ENCODE measurements at regions of chr10 and their contacts with region 1.

Region 1: DNA sequence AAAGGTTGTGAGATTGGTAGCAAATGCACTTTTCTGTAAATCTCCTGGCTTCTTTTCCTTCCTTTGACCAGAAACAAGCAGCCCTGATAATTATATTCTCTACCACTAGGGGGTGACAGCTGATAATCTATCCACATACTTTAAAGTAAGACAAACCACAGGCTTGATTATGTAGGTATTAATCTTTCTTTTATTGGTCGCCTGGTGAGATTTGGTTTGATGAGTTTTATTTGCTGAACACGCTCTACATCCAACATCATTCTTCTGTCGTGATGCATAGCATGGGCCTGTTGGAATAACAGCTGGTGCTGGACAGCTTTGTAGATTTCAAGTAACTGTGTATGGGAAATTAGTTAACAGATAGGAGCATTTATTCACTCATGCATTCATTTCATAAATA is 63.5 kb downstream of the ZNF365 start:
- DNase-seq: peak in 1 of 2 experiments; percentile 67
- H3K4me3 ChIP-seq: no peak overlapping the region
- H3K27ac ChIP-seq: no peak overlapping the region
- H3K4me1 ChIP-seq: peaks cover 17% of the 10 kb centered on the region
- H3K27me3 ChIP-seq: no peaks in the 10 kb centered on the region
- CTCF ChIP-seq: peak; percentile 95

Region 2: GRCh38 chr10:62268399-62269114 is 169.1 kb before region 1 on chr10 and contains the start of gene RTKN2:
- CTCF ChIA-PET with region 1: no interaction called
- POLR2A ChIA-PET with region 1: interaction called, 9 read pairs
- intact Hi-C with region 1: loop called (anchors 1 kb)
- DNase-seq: peak; percentile 90 to 96
- H3K4me3 ChIP-seq: peak within 1 kb of the TSS; percentile 95
- H3K27ac ChIP-seq: peak within 1 kb of the TSS; percentile 54
- H3K4me1 ChIP-seq: peaks cover 33% of the 10 kb centered on the region
- H3K27me3 ChIP-seq: no peaks in the 10 kb centered on the region
- CTCF ChIP-seq: no peak
- total RNA-seq, gene RTKN2: 16.1 and 18.5 TPM in 2 replicates

Region 3: DNA sequence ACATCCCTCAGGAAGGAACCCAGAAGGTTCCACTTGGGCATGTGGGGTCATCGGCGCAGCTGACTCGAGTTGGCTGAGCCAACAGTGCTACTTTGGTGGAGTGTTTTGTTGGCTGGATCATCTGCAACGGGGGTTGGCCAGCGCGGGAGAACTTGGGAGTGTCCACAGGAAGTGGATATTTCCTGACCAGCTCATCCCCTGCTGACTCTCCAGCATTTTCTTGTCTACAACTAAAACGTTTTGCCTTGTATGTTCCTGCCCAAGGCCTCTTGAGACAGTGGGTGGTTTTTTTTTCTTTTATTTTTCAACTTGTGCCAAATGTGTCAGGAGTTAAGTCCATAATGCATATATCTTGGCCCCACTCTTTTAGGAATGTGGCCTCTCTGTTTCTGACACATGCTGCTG is 145.1 kb after region 1 on chr10:
- CTCF ChIA-PET with region 1: no interaction called
- POLR2A ChIA-PET with region 1: no interaction called
- intact Hi-C with region 1: loop called (anchors 10 kb)
- DNase-seq: no peak
- H3K4me3 ChIP-seq: no peak overlapping the region
- H3K27ac ChIP-seq: no peak overlapping the region
- H3K4me1 ChIP-seq: no peaks in the 10 kb centered on the region
- H3K27me3 ChIP-seq: no peaks in the 10 kb centered on the region
- CTCF ChIP-seq: no peak

Region 4: GRCh38 chr10:63083904-63084689 is 646.4 kb after region 1 on chr10:
- CTCF ChIA-PET with region 1: no interaction called
- POLR2A ChIA-PET with region 1: no interaction called
- intact Hi-C with region 1: loop called (anchors 5 kb)
- DNase-seq: peak; percentile 24 to 53
- H3K4me3 ChIP-seq: no peak overlapping the region
- H3K27ac ChIP-seq: no peak overlapping the region
- H3K4me1 ChIP-seq: no peaks in the 10 kb centered on the region
- H3K27me3 ChIP-seq: no peaks in the 10 kb centered on the region
- CTCF ChIP-seq: peak; percentile 84

Region 5: DNA sequence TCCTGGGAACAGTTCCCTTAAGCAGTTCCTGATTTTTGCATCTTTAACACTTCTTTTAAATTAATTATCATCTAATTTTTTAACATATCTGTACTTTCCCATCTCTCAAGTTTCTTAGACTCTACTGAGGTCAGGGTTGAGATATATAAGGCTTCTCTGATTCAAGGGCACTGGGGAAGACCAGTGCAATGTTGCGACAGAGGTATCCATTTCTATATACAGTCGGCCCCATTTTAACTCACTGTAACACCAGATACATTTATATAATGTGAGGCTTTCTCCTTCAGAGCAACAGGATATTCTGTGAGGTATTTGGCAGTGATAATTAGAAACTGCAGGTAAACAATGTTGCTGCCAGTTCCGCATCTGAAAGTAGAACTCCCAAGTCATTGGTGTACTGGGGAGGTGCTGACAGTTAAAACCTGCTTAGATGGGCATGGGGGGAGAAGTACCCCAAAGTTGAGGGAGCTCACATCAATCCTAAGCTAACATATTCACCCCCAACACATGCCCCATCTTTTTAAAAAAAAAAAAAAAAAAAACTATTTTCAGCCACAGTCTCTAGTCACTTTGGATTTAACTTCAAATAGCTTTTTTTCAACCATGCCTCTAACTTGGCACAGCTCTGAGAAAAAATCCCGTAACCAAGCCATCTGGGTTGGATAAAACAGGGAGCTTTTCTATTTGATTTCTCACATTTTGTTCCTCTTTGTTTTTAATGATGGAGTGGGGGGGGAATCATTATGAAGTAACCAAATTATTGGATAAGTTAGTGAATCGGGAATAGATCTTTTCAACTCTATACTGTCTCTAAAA is 1146.4 kb after region 1 on chr10:
- CTCF ChIA-PET with region 1: no interaction called
- POLR2A ChIA-PET with region 1: interaction called, 18 read pairs
- intact Hi-C with region 1: no loop called
- DNase-seq: no peak
- H3K4me3 ChIP-seq: no peak overlapping the region
- H3K27ac ChIP-seq: no peak overlapping the region
- H3K4me1 ChIP-seq: peaks cover 13% of the 10 kb centered on the region
- H3K27me3 ChIP-seq: no peaks in the 10 kb centered on the region
- CTCF ChIP-seq: no peak

Measured in PC-9 (cell line).